ENCODE measurements at regions of chr14 and their contacts with region 1.

Region 1: DNA sequence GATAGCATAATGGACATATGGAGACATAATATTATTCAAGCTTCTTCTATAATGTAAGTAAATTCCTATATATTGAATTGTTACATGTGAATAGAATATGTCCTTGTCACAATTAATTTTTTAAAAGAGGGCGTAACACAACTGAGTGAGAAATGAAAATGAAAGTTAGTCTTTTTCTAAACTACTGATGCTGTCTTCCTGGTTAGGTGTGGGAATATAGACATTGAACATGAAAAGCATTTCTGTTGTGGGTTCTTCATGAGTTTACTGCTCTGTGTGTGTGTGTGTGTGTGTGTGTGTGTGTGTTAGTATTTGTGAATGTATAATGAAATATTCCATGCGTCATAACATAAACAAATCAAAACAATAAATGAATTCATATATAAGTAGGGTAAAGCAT is 40.5 kb upstream of the RTL1 start:
- DNase-seq: no peak
- H3K4me3 ChIP-seq: no peak overlapping the region
- H3K27ac ChIP-seq: no peak overlapping the region
- H3K4me1 ChIP-seq: no peaks in the 10 kb centered on the region
- H3K27me3 ChIP-seq: no peaks in the 10 kb centered on the region
- CTCF ChIP-seq: no peak
- POLR2A ChIP-seq: no peak

Region 2: DNA sequence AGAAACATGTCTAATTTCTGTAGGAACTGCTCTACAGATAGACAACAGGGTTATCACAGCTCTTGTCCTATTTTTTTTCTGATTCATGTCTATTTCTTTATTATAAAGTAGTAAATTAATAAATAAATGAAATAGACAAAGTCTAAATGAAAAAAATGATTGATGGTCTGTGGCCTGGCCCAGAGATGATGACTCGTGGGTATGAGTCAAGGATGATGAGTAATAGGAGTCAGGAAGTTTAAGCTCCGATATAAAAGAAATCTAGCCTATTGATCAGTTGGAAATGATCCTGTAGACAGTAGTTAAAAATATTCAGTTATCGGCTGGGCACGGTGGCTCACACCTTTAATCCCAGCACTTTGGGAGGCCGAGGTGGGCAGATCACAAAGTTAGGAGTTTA is 50.0 kb after region 1 on chr14:
- CTCF ChIA-PET with region 1: no interaction called
- POLR2A ChIA-PET with region 1: no interaction called
- dilution Hi-C with region 1: no loop called
- intact Hi-C with region 1: loop called (anchors 5 kb)
- DNase-seq: peak; percentile 38
- H3K4me3 ChIP-seq: no peak overlapping the region
- H3K27ac ChIP-seq: no peak overlapping the region
- H3K4me1 ChIP-seq: peaks cover 8% of the 10 kb centered on the region
- H3K27me3 ChIP-seq: no peaks in the 10 kb centered on the region
- CTCF ChIP-seq: no peak
- POLR2A ChIP-seq: no peak